Sciatic nerve (tissue), 2 donors: ENCODE measurements at regions of chr14 and their contacts with region 1.

Region 1: GRCh38 chr14:84566109-84566508 is 963.8 kb upstream of the FLRT2 start:
- DNase-seq: no peak
- ATAC-seq: no peak

Region 2: DNA sequence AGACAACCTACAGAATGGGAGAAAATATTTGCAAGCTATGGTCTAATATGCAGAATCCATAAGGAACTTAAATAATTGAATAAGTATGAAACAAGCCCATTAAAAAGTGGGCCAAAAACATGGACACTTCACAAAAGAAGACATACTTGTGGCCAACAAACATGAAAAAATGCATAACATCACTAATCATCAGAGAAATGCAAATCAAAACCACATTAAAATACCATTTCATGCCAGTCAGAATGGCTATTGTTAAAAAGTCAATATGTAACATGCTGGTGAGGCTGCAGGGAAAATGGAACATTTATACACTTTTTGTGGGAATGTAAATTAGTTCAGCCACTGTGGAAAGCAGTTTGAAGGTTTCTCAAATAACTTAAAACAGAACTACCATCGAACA is 18.4 kb after region 1 on chr14:
- intact Hi-C with region 1: loop called (anchors 1 kb)
- DNase-seq: no peak
- ATAC-seq: no peak

Region 3: GRCh38 chr14:84657911-84658310 is 91.8 kb after region 1 on chr14:
- intact Hi-C with region 1: no loop called
- DNase-seq: no peak
- ATAC-seq: no peak